ENCODE measurements at regions of chr3 and their contacts with region 1.

Region 1: DNA sequence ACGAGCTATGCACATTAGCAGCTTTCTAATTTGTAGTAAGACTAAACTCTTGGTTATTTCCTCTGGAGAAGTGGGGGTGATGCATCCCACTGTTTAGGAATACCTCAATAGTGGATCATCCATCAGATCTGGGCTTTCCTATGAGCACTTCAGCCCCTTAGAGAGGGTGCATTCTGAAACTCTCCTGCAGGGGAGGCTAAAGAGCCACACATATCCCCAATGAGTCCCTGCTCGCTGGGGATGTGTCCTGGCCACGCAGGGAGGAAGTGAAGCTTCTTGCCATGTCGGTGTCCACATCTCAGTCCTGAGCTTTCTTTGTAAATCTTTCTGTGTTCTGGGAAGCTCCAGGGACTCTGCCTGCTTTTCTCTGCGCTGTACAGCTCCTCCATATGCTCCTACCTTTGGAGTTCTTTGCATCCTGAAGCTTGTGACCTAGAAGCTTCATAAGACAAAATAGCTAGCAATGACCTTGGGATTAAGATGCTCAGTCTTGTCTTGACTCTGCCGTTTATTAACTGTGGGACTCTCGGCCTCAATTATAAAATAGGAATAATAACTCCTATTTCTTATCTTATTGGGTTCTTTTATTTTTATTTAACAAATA is 28.3 kb upstream of the MASP1 start:
- DNase-seq: peak; percentile 90
- ATAC-seq: peak; percentile 96
- H3K4me3 Mint-ChIP-seq: no peak overlapping the region
- H3K27ac Mint-ChIP-seq: no peak overlapping the region
- H3K4me1 Mint-ChIP-seq: peaks cover 27% of the 10 kb centered on the region
- H3K27me3 Mint-ChIP-seq: no peaks in the 10 kb centered on the region
- CTCF ChIP-seq: peak; percentile 99

Region 2: DNA sequence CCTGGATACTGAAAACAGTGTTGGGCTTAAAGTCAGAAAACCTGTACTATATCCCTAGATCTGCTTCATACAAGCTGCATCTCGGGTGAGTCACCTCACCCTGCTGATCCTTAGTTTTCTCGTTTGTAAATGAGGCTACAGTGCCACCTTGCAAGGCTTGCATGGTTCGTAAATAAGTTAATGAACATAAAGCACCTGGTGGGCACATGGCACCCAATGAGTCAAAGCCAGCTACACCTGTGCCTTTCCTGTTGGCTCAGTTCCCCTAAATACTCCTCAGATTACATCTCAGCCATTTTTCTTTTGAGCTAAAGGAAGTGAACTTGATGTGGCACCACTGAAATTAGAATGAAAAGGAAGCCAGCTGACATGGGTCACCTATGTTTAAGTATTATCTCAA is 96.0 kb before region 1 on chr3:
- CTCF ChIA-PET with region 1: interaction called, 136 read pairs
- POLR2A ChIA-PET with region 1: interaction called, 4 read pairs
- DNase-seq: no peak
- ATAC-seq: no peak
- H3K4me3 Mint-ChIP-seq: no peak overlapping the region
- H3K27ac Mint-ChIP-seq: no peak overlapping the region
- H3K4me1 Mint-ChIP-seq: peaks cover 15% of the 10 kb centered on the region
- H3K27me3 Mint-ChIP-seq: peaks cover 4% of the 10 kb centered on the region; the same call in 1 of the 2 replicates
- CTCF ChIP-seq: no peak

Region 3: DNA sequence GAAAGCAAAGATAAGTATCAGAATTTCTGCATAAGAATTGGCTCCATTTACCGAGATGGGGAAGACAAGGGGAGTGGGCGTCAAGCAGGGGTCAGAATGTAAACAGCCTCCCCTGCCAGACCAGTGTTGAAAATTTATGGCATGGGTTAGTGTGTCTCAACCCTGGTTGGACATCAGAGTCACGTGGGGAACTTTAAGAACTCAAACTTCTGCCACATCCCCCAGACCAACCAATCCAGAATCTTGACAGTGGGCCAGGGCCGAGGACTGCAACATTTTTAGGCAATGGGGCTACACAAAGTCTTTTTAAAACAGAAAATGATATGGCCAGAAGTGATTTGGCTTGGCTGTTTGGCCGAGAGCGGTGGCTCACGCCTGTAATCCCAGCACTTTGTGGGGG is 13.9 kb before region 1 on chr3:
- CTCF ChIA-PET with region 1: interaction called, 10 read pairs
- POLR2A ChIA-PET with region 1: interaction called, 3 read pairs
- DNase-seq: no peak
- ATAC-seq: peak; percentile 48; the same call in 1 of the 2 replicates
- H3K4me3 Mint-ChIP-seq: no peak overlapping the region
- H3K27ac Mint-ChIP-seq: no peak overlapping the region
- H3K4me1 Mint-ChIP-seq: peaks cover 8% of the 10 kb centered on the region
- H3K27me3 Mint-ChIP-seq: no peaks in the 10 kb centered on the region
- CTCF ChIP-seq: no peak

Region 4: DNA sequence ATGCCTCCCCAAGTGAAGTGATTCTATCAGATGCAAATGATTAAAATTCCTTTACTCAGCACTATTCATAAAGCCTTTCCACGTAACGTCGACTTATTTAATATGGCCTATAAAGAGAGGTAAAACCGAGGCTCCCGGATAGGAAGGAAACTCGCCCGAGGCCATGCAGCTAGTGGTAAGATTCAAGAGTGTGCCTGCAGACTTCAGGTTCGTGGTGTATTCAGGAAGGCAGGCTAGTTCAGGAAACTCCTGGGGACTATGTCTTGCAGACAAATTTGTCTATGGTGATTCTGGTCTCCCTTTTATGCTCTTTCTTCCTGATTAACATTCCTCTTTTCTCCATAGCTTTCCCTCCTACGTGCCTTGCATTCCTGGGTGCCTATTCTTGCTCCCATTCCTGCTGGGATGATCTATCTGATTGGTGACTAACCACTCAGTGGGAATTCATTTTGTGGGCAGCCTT is 199.7 kb after region 1 on chr3:
- CTCF ChIA-PET with region 1: interaction called, 12 read pairs
- POLR2A ChIA-PET with region 1: no interaction called
- DNase-seq: peak; percentile 35
- ATAC-seq: peak; percentile 92
- H3K4me3 Mint-ChIP-seq: peak overlapping the region; percentile 17
- H3K27ac Mint-ChIP-seq: peak overlapping the region; percentile 95
- H3K4me1 Mint-ChIP-seq: peaks cover 40% of the 10 kb centered on the region
- H3K27me3 Mint-ChIP-seq: no peaks in the 10 kb centered on the region; the same call in 1 of the 2 replicates
- CTCF ChIP-seq: no peak

Region 5: DNA sequence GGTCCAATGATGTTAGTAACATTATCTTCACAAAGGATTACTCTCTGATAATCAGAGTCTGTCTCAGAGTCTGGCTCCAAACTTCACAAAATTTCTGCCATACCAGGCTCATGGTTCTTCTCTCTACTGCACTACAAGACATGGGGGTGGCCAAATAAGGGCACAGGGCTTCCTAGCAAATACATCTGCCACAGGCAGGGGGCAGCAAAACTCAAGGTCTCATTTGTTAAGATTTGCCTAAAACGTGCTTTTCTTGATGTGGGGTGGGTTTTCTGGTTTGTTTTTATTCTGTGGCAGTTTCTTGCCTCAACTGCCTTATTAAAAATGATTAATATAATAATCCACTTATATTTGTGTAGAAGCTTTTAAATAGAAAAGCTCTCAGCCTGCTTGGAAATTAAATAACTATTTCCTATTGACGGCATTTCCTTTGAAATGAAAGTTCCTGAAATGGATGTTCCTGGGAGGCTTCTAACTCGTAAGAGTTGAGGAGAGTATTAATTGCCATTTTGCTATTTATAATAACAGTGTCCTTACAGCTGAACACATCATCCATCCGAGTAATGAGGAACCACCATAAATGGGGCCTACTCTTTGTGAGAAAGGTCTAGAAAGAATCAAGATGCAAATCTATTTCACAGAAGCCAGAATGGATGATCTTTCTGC is 296.6 kb after region 1 on chr3:
- CTCF ChIA-PET with region 1: interaction called, 57 read pairs
- POLR2A ChIA-PET with region 1: no interaction called
- DNase-seq: peak; percentile 62
- ATAC-seq: peak; percentile 67
- H3K4me3 Mint-ChIP-seq: no peak overlapping the region
- H3K27ac Mint-ChIP-seq: no peak overlapping the region
- H3K4me1 Mint-ChIP-seq: peaks cover 57% of the 10 kb centered on the region
- H3K27me3 Mint-ChIP-seq: peaks cover 96% of the 10 kb centered on the region
- CTCF ChIP-seq: peak; percentile 69

Region 6: DNA sequence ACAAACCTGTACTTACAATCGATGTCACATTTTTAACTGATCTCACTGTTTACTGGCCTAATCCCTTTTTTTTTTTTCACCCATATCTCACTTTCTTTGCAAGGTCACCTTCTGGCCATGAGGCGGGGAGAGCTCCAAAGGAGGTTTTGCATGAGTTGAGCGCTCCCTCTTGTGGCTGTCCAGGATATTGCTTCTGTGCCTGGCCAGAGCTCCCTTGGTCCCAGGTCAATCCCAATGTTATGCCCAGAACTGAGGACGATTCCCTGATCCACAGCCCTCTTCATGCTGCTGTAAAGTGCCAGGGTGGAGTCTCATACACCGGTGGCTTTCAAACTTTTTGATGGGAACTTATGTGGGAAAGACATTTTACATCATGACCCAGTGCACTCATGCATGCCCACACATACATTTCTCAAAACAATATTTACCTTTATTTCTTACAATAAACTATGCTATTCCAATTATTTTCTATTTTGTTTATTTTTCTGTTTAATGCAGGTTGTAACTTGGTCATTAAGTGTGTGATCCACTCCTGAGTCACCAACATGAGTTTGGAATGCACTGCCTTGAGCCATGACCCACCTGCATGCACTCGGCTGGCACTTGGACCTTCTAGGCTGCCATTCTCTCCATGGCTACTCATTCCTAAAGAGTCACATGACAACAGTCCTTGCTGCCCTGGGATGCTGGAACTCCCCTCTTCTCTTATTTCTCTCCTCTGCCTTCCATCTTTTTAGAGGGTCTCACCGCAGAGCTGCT is 360.0 kb after region 1 on chr3:
- CTCF ChIA-PET with region 1: interaction called, 433 read pairs
- POLR2A ChIA-PET with region 1: interaction called, 18 read pairs
- DNase-seq: peak; percentile 92
- ATAC-seq: peak; percentile 91
- H3K4me3 Mint-ChIP-seq: no peak overlapping the region
- H3K27ac Mint-ChIP-seq: 0 out of 2 replicates have a peak overlapping the region, but pooled peaks have one; percentile 15
- H3K4me1 Mint-ChIP-seq: peaks cover 20% of the 10 kb centered on the region
- H3K27me3 Mint-ChIP-seq: peaks cover 39% of the 10 kb centered on the region
- CTCF ChIP-seq: peak; percentile 93

Region 7: GRCh38 chr3:187714404-187714979 is 394.7 kb after region 1 on chr3:
- CTCF ChIA-PET with region 1: interaction called, 36 read pairs
- POLR2A ChIA-PET with region 1: no interaction called
- DNase-seq: peak; percentile 81
- ATAC-seq: peak; percentile 94
- H3K4me3 Mint-ChIP-seq: no peak overlapping the region
- H3K27ac Mint-ChIP-seq: no peak overlapping the region
- H3K4me1 Mint-ChIP-seq: peaks cover 10% of the 10 kb centered on the region
- H3K27me3 Mint-ChIP-seq: peaks cover 9% of the 10 kb centered on the region; the same call in 1 of the 2 replicates
- CTCF ChIP-seq: peak; percentile 93